ENCODE measurements at regions of chr12 and their contacts with region 1.

Region 1: GRCh38 chr12:104790296-104791125 is 167.6 kb downstream of the SLC41A2 start:
- DNase-seq: peak in 1 of 2 experiments; percentile 85
- H3K4me3 ChIP-seq: peak overlapping the region in 1 of 4 experiments; percentile 32; a peak in 2 of 8 replicates
- H3K27ac ChIP-seq: no peak overlapping the region
- H3K4me1 ChIP-seq: peaks cover 2 to 8% (median 5%) of the 10 kb centered on the region in 4 experiments; a peak in 4 of 7 replicates
- H3K27me3 ChIP-seq: no peaks in the 10 kb centered on the region
- CTCF ChIP-seq: peak; percentile 65 to 91 (median 86)
- EP300 ChIP-seq: no peak
- POLR2A ChIP-seq: no peak
- RAD21 ChIP-seq: peak; percentile 55 to 76

Region 2: DNA sequence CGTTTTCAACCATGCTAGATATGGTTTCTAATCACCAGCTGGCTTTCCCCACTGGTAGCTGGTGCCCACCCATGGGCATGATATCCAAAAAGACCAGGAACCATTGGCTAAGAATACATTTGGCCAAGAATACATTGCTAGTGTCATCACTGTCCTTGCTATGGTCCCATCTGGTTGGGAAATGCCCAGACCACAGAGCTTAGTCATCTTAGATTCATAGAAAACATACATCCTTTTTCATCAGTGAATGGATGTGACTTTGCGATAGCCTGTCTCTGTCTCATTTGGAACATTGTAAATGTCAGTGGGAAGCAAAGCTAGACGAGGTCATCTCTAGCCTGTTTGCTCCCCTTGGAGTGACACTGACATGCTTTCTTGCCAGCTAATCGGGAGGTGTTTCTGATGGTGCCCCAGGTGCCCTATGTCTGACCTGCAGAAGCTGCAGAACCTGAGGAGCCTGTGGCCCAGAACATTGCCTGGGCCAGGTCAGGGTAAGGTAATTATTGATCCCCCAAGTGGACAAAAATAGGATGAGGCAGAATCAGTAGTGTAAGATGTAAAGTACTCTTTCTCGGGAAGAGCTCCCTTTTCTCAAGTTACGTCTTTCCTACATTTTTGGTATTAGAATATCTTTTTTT is 27.2 kb before region 1 on chr12:
- CTCF ChIA-PET with region 1: interaction called, 34 read pairs
- POLR2A ChIA-PET with region 1: no interaction called
- DNase-seq: peak in 1 of 2 experiments; percentile 14
- H3K4me3 ChIP-seq: no peak overlapping the region
- H3K27ac ChIP-seq: no peak overlapping the region
- H3K4me1 ChIP-seq: peaks cover 0 to 3% (median 2%) of the 10 kb centered on the region in 4 experiments; a peak in 1 of 7 replicates
- H3K27me3 ChIP-seq: no peaks in the 10 kb centered on the region
- CTCF ChIP-seq: no peak
- EP300 ChIP-seq: no peak
- POLR2A ChIP-seq: no peak
- RAD21 ChIP-seq: no peak

Region 3: DNA sequence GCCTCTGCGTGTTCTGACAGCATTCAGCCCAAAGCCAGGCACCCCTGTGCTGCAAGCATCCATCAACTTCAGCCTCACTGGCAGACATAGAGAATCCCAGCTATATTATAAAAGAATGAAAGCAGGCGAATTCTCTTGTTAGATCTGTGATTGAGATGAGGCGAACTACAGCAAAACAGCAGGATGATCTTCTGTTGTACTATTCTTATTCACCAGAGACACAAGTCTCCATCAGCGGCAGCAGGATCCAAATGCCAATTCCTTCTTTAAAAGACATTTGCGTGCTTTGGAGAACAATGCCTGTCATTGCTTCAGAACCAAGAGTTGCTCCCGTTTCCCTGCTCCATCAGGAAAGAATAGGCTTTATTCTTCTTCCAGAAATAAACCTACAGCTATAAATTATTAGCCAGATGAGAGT is 21.4 kb before region 1 on chr12:
- CTCF ChIA-PET with region 1: interaction called, 34 read pairs
- POLR2A ChIA-PET with region 1: no interaction called
- DNase-seq: peak in 1 of 2 experiments; percentile 41
- H3K4me3 ChIP-seq: no peak overlapping the region
- H3K27ac ChIP-seq: no peak overlapping the region
- H3K4me1 ChIP-seq: peaks cover 0 to 10% (median 0%) of the 10 kb centered on the region in 4 experiments; a peak in 4 of 7 replicates
- H3K27me3 ChIP-seq: no peaks in the 10 kb centered on the region
- CTCF ChIP-seq: no peak
- EP300 ChIP-seq: no peak
- POLR2A ChIP-seq: no peak
- RAD21 ChIP-seq: no peak

Region 4: DNA sequence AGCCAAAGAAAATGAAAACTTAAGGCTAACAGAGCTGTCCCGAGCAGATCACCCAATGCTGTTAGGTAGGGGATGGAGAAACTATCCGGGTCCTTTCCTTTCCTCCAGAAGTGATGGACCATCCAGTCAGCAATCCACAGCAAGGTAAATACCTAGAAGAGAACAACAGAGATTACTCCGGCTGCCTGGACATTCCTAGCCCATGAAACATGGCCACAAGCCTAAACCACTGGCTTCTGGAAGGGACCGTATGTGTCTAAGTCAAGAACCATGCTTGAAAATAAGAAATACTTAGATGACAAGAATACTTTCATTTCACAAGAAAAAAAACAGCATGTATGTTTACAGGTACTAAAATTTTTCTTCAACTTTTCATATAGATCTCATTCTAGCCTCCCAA is 14.7 kb after region 1 on chr12:
- CTCF ChIA-PET with region 1: interaction called, 21 read pairs
- POLR2A ChIA-PET with region 1: interaction called, 3 read pairs
- DNase-seq: no peak
- H3K4me3 ChIP-seq: no peak overlapping the region
- H3K27ac ChIP-seq: no peak overlapping the region
- H3K4me1 ChIP-seq: no peaks in the 10 kb centered on the region
- H3K27me3 ChIP-seq: no peaks in the 10 kb centered on the region
- CTCF ChIP-seq: no peak
- EP300 ChIP-seq: no peak
- POLR2A ChIP-seq: no peak
- RAD21 ChIP-seq: no peak

Region 5: DNA sequence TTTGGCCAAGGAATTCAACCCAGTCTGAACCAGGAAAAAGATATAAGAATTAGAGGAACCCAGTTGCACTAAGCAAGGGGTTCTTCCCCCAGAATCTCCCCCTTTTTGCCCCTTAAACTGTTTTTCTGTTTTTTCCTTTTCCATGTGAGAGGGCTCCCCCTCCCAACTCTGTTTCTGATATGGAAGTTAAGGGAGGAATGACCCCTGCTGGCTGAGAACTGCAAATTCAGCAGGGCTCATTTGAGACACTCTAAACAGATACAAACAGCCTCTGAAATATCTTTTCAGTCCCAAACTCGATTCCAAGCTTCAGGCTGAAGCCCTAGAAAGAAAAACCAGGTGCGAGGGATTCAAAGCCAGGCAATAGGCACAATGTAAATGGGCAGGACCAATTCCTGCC is 34.9 kb after region 1 on chr12:
- CTCF ChIA-PET with region 1: interaction called, 14 read pairs
- POLR2A ChIA-PET with region 1: no interaction called
- DNase-seq: no peak
- H3K4me3 ChIP-seq: no peak overlapping the region
- H3K27ac ChIP-seq: no peak overlapping the region
- H3K4me1 ChIP-seq: no peaks in the 10 kb centered on the region
- H3K27me3 ChIP-seq: no peaks in the 10 kb centered on the region
- CTCF ChIP-seq: peak in 2 of 3 experiments; percentile 18 to 27; a peak in 2 of 4 replicates
- EP300 ChIP-seq: no peak
- POLR2A ChIP-seq: no peak
- RAD21 ChIP-seq: peak; percentile 56 to 66

Region 6: GRCh38 chr12:104834607-104835006 is 44.1 kb after region 1 on chr12:
- CTCF ChIA-PET with region 1: interaction called, 10 read pairs
- POLR2A ChIA-PET with region 1: no interaction called
- DNase-seq: no peak
- H3K4me3 ChIP-seq: no peak overlapping the region
- H3K27ac ChIP-seq: no peak overlapping the region
- H3K4me1 ChIP-seq: no peaks in the 10 kb centered on the region
- H3K27me3 ChIP-seq: peaks cover 0 to 1% (median 0%) of the 10 kb centered on the region in 4 experiments; a peak in 1 of 7 replicates
- CTCF ChIP-seq: no peak
- EP300 ChIP-seq: no peak
- POLR2A ChIP-seq: no peak
- RAD21 ChIP-seq: no peak

Measured in H1 (cell line).